PC-3 (cell line): ENCODE measurements at regions of chr12 and their contacts with region 1.

Region 1: DNA sequence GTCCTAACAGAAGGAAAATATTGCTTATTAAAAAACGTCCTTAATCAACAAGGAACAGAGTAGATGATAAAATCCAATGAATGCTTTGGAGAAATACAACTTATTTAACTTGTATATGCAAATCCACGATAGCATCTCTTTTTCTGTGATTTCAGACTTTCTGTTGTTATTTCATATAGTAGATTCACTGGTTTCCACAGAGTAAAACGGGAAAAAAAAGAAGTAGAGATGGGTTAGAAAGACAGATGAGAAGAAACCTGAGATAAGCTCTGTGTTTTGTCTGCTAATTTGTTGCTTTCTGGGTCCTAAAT is 447.7 kb downstream of the RERGL start:
- DNase-seq: no peak
- ATAC-seq: no peak
- H3K4me3 ChIP-seq: 0 out of 2 replicates have a peak overlapping the region, but pooled peaks have one; percentile 52
- H3K27ac ChIP-seq: no peak overlapping the region
- H3K4me1 ChIP-seq: no peaks in the 10 kb centered on the region
- H3K27me3 ChIP-seq: no peaks in the 10 kb centered on the region
- CTCF ChIP-seq: no peak; the same call in 1 of the 2 replicates

Region 2: GRCh38 chr12:17159506-17160300 is 482.6 kb before region 1 on chr12:
- CTCF ChIA-PET with region 1: no interaction called
- POLR2A ChIA-PET with region 1: no interaction called
- intact Hi-C with region 1: loop called (anchors 5 kb)
- DNase-seq: no peak
- ATAC-seq: no peak
- H3K4me3 ChIP-seq: no peak overlapping the region
- H3K27ac ChIP-seq: no peak overlapping the region
- H3K4me1 ChIP-seq: no peaks in the 10 kb centered on the region
- H3K27me3 ChIP-seq: no peaks in the 10 kb centered on the region
- CTCF ChIP-seq: no peak

Region 3: GRCh38 chr12:17661250-17661649 is 19.0 kb after region 1 on chr12:
- CTCF ChIA-PET with region 1: no interaction called
- POLR2A ChIA-PET with region 1: no interaction called
- intact Hi-C with region 1: no loop called
- DNase-seq: peak; percentile 55
- ATAC-seq: peak; percentile 86
- H3K4me3 ChIP-seq: no peak overlapping the region
- H3K27ac ChIP-seq: no peak overlapping the region
- H3K4me1 ChIP-seq: no peaks in the 10 kb centered on the region
- H3K27me3 ChIP-seq: no peaks in the 10 kb centered on the region
- CTCF ChIP-seq: no peak